Activated CD8-positive, alpha-beta T cell treated with anti-CD3 and anti-CD28 coated beads for 36 hours (primary cell): ENCODE measurements at regions of chr18 and their contacts with region 1.

Region 1: GRCh38 chr18:12531749-12532148 is 124.0 kb downstream of the PRELID3A start:
- DNase-seq: no peak
- ATAC-seq: no peak
- H3K4me3 Mint-ChIP-seq: no peak overlapping the region
- H3K27ac Mint-ChIP-seq: no peak overlapping the region
- H3K4me1 Mint-ChIP-seq: no peaks in the 10 kb centered on the region
- H3K27me3 Mint-ChIP-seq: no peaks in the 10 kb centered on the region
- CTCF ChIP-seq: no peak

Region 2: DNA sequence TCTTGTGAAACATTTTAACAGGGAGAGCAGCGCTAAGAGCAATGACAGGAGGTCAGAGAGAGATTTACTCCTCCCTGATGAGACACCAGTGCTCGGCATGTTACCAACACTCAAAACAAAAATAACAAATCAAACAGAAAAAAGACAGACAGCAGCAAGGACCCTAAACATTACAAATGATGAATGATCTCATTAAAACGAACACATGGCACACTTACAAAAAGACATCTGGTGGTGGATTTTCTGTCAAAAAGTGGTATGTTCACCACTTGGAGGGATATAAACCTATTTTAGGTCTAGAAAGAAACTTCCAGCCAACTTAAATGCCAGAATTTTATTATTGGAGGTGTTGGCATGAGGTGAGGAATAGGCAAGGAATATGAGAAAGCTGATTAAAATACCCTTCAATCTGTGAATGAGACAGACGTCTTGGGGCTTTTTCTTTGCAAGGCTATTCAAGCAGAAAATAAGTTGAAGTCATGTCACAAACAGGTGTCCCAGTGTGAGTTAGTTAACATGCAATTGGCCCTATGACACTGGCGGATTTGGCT is 11.2 kb before region 1 on chr18:
- CTCF ChIA-PET with region 1: no interaction called
- POLR2A ChIA-PET with region 1: no interaction called
- intact Hi-C with region 1: no loop called
- DNase-seq: no peak
- ATAC-seq: no peak
- H3K4me3 Mint-ChIP-seq: no peak overlapping the region
- H3K27ac Mint-ChIP-seq: no peak overlapping the region
- H3K4me1 Mint-ChIP-seq: no peaks in the 10 kb centered on the region
- H3K27me3 Mint-ChIP-seq: peaks cover 5% of the 10 kb centered on the region
- CTCF ChIP-seq: no peak

Region 3: GRCh38 chr18:12657684-12658425 is 126.1 kb after region 1 on chr18 and contains the start of gene SPIRE1:
- CTCF ChIA-PET with region 1: no interaction called
- POLR2A ChIA-PET with region 1: no interaction called
- intact Hi-C with region 1: loop called (anchors 10 kb)
- DNase-seq: peak; percentile 33
- ATAC-seq: peak; percentile 52
- H3K4me3 Mint-ChIP-seq: peak within 1 kb of the TSS; percentile 76
- H3K27ac Mint-ChIP-seq: no peak within 1 kb of the TSS
- H3K4me1 Mint-ChIP-seq: peaks cover 17% of the 10 kb centered on the region
- H3K27me3 Mint-ChIP-seq: peaks cover 27% of the 10 kb centered on the region
- CTCF ChIP-seq: no peak
- total RNA-seq, gene SPIRE1: 2.8 to 4.4 TPM

Region 4: DNA sequence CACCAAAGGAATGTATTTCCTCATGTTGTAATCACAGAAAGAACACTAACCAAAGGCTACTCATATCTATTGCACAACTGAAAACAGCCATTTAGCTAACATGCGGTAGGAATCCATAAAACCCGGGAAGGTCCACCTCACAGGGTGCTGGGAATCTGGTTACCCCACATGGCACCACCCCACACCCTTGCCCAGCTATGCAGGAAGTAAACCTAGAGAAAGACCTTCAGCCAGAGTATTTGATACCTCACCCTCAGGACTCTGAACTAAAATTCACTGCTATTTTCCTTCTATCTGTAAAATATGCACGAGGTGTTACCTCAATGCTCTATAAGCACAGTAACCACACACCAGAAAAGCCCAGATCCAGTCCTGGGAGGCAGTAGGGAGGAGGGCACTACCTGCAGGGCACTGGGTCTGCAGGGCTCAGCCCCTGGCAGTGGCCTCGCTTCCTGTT is 306.5 kb after region 1 on chr18:
- CTCF ChIA-PET with region 1: no interaction called
- POLR2A ChIA-PET with region 1: no interaction called
- intact Hi-C with region 1: no loop called
- DNase-seq: no peak
- ATAC-seq: no peak
- H3K4me3 Mint-ChIP-seq: peak overlapping the region; percentile 59
- H3K27ac Mint-ChIP-seq: peak overlapping the region; percentile 90
- H3K4me1 Mint-ChIP-seq: peaks cover 47% of the 10 kb centered on the region
- H3K27me3 Mint-ChIP-seq: no peaks in the 10 kb centered on the region
- CTCF ChIP-seq: no peak